ENCODE measurements at regions of chr17 and their contacts with region 1.

Region 1: GRCh38 chr17:45828628-45829027 is 16.1 kb upstream of the SPPL2C start:
- DNase-seq: no peak
- H3K4me3 ChIP-seq: no peak overlapping the region
- H3K27me3 ChIP-seq: peaks cover 2% of the 10 kb centered on the region; the same call in 1 of the 2 replicates
- CTCF ChIP-seq: no peak

Region 2: GRCh38 chr17:45640141-45640850 is 188.3 kb before region 1 on chr17:
- CTCF ChIA-PET with region 1: interaction called, 185 read pairs
- POLR2A ChIA-PET with region 1: no interaction called
- DNase-seq: no peak
- H3K4me3 ChIP-seq: no peak overlapping the region
- H3K27me3 ChIP-seq: no peaks in the 10 kb centered on the region
- CTCF ChIP-seq: peak; percentile 96

Region 3: DNA sequence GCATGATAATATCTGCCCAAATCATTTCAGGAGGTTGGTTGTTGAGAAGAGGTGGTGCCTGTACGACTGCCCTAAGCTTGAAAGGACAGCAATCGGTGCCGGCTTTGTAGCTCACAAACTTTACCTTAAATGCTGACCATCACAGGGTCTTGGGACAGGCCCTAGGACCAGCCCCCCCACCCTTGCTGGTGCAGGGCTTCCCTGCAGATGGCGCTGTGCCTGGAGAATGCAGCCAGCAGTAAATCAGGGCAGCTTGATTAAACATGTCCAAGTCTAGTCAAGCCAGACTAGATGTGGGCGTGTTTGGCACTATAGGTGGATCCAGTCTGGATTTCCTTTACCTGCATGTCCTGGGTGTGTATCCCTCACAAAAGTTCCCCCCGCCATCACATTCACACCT is 180.0 kb before region 1 on chr17:
- CTCF ChIA-PET with region 1: interaction called, 20 read pairs
- POLR2A ChIA-PET with region 1: no interaction called
- DNase-seq: no peak
- H3K4me3 ChIP-seq: no peak overlapping the region
- H3K27me3 ChIP-seq: peaks cover 1% of the 10 kb centered on the region; the same call in 1 of the 2 replicates
- CTCF ChIP-seq: no peak

Region 4: DNA sequence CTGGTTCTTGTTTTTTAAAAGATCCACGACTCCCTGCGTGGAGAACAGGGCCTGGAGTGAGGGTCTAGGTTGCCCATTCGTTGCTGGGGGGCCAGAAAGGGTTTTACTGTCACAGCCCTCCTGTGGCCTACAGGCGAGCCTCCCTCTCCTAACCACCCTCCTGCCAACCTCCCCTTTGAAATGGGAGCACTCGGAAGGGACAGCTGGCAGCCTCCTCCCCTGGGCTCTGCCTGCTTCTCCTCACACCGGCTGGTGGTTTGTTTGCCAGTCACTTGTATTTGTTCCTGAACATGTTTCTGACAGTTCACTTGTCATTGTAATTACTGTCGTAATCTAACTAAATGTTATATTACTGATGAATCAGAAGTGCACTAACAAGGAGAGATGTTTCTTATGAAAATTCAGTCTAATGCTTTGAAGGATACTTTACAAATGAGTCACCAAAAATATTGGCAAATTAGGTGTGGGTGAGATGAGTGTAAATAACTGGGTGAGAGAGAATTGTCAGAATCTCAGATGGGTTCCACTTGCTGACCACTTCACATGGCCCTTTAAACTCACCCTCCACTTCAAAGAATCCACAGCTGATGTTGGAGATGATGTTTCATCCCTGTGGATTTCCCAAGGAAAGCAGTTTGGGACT is 13.4 kb after region 1 on chr17:
- CTCF ChIA-PET with region 1: interaction called, 18 read pairs
- POLR2A ChIA-PET with region 1: no interaction called
- DNase-seq: no peak
- H3K4me3 ChIP-seq: no peak overlapping the region
- H3K27me3 ChIP-seq: peaks cover 7% of the 10 kb centered on the region
- CTCF ChIP-seq: no peak

Region 5: GRCh38 chr17:45852535-45853297 is 24.1 kb after region 1 on chr17:
- CTCF ChIA-PET with region 1: interaction called, 17 read pairs
- POLR2A ChIA-PET with region 1: no interaction called
- DNase-seq: no peak
- H3K4me3 ChIP-seq: no peak overlapping the region
- H3K27me3 ChIP-seq: peaks cover 6% of the 10 kb centered on the region
- CTCF ChIP-seq: peak; percentile 89

Region 6: GRCh38 chr17:45895304-45895968 is 66.8 kb after region 1 on chr17:
- CTCF ChIA-PET with region 1: no interaction called
- POLR2A ChIA-PET with region 1: no interaction called
- DNase-seq: no peak
- H3K4me3 ChIP-seq: peak overlapping the region; percentile 64
- H3K27me3 ChIP-seq: peaks cover 31% of the 10 kb centered on the region
- CTCF ChIP-seq: no peak

Region 7: GRCh38 chr17:45914047-45914717 is 85.6 kb after region 1 on chr17:
- CTCF ChIA-PET with region 1: no interaction called
- POLR2A ChIA-PET with region 1: no interaction called
- DNase-seq: no peak
- H3K4me3 ChIP-seq: no peak overlapping the region
- H3K27me3 ChIP-seq: peaks cover 7% of the 10 kb centered on the region
- CTCF ChIP-seq: no peak

Region 8: DNA sequence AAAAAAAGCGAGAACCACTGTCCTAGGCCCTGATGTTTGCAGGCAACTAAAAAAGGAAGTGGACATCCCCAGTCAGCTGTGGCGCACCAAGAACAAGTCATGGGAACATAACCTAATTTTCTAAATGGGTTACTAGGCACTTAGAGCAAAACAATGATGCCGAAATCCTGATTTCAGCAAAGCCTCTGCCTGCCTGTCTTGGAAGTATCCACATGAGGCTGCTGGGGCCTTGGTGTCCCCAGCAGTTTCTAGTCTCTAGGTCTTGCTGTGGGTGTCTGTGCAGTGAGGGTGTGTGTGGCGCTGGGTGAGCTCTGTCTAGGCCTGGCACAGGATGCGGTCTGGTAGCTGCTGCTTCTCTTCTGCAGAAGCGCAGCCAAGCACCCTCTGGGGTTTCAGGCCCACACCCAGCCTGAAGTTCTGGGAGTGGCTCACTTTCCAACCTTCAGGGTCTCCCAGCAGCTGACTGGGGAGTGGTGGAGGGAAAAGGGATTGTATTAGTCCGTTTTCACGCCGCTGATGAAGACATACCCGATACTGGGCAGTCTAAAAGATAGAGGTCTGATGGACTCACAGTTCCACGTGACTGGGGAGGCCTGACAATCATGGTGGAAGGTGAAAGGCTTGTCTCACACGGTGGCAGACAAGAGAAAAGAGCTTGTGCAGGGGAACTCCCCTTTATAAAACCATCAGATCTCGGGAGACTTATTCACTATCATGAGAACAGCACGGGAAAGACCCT is 191.6 kb after region 1 on chr17:
- CTCF ChIA-PET with region 1: no interaction called
- POLR2A ChIA-PET with region 1: no interaction called
- DNase-seq: no peak
- H3K4me3 ChIP-seq: no peak overlapping the region
- H3K27me3 ChIP-seq: no peaks in the 10 kb centered on the region
- CTCF ChIP-seq: no peak

Measured in BJ (cell line).